WTC11 (cell line): ENCODE measurements at regions of chr6 and their contacts with region 1.

Region 1: DNA sequence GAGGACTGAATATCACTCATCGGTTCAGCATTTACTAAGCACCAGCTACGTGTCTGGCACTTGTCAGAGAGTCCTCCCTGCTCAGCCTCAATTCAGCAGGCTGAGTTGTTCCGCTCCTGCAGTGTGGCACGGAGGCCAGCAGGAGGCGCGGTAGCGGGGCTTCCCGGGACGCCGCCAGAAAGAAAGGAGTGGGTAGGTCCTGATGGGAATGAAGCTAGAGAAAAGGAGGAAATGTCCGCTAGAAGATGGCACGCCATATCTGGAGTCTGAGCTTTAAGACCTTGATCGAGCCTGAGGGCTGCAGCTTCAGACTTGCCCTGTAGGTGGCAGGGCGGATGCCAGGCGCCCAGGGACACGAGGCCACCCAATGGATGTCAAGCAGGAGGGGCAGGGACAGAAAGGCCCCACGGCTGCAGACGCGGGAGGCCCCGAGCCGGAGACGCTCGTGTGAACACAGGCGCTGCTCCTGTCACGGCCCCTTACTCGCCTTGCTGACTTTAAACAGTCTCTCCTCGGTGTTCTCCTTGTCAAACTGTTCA is 18.7 kb downstream of the SERPINB6 start:
- DNase-seq: peak; percentile 91
- ATAC-seq: peak; percentile 92
- H3K4me3 Mint-ChIP-seq: peak overlapping the region; percentile 22; the same call in 1 of the 2 replicates
- H3K27ac Mint-ChIP-seq: peak overlapping the region; percentile 33; the same call in 1 of the 2 replicates
- H3K4me1 Mint-ChIP-seq: peaks cover 24% of the 10 kb centered on the region
- H3K27me3 Mint-ChIP-seq: no peaks in the 10 kb centered on the region
- CTCF ChIP-seq: peak; percentile 96

Region 2: DNA sequence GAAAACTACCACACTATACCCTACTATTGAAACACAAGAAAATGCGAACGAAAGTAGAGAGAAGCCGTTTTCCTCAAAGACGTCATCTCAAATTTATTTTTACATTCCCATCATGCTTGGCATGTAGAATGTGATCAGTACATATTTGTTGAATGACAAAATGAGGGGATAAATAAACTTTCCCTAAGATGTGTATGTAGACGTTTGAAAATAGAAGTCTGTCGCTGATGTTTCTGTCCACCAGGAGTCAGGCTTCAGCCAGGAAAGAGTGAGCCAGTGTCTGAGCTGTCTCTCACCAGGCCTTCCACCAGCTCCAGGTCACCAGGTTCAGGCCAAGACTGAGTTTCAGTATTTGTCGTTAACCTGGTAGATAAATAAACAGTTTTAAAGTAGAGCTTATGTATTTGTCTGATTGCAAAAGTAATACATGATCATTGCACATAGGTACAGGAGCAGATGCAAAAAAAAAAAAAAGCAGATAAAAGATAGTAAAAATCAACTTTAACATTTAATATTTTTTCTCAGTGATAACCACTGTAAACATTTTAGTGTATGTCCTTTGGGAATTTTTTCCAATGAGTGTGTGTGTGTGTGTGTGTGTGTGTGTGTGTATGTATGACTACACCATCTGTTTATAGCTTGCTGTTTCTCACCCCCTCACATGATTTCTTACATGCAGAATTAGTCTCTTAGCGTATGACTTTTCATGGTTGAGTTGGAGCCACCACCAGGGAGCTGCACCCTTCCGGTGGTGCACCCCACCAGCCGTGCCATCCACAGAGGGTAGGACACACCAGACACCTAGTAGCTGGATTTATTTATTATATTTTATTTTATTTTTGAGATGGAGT is 161.3 kb before region 1 on chr6:
- CTCF ChIA-PET with region 1: interaction called, 34 read pairs
- POLR2A ChIA-PET with region 1: no interaction called
- DNase-seq: peak; percentile 65
- ATAC-seq: peak; percentile 73
- H3K4me3 Mint-ChIP-seq: no peak overlapping the region
- H3K27ac Mint-ChIP-seq: peak overlapping the region; percentile 95
- H3K4me1 Mint-ChIP-seq: peaks cover 13% of the 10 kb centered on the region
- H3K27me3 Mint-ChIP-seq: no peaks in the 10 kb centered on the region
- CTCF ChIP-seq: peak; percentile 43

Region 3: DNA sequence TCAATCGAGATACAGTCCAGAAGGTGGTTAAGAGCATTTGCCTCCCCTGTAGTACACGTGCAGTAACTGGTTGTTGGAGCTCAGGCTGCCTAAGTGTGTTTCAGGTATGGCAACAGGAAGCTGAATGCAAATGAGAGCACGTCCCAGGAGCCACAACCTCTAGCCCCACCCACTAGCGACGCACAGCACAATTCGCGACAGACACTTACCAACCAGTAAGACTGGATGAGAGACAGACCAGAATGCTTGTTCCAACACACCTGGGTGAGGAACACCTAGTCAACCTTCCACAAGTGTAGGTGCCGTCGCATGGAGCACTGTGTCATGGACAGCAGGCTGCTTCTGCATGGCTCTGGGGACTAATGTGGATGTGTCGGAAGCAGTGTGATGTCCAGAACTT is 103.8 kb before region 1 on chr6:
- CTCF ChIA-PET with region 1: interaction called, 52 read pairs
- POLR2A ChIA-PET with region 1: interaction called, 3 read pairs
- DNase-seq: peak; percentile 63
- ATAC-seq: peak; percentile 82
- H3K4me3 Mint-ChIP-seq: 0 out of 2 replicates have a peak overlapping the region, but pooled peaks have one; percentile 0
- H3K27ac Mint-ChIP-seq: peak overlapping the region; percentile 88
- H3K4me1 Mint-ChIP-seq: peaks cover 37% of the 10 kb centered on the region
- H3K27me3 Mint-ChIP-seq: no peaks in the 10 kb centered on the region
- CTCF ChIP-seq: no peak

Region 4: DNA sequence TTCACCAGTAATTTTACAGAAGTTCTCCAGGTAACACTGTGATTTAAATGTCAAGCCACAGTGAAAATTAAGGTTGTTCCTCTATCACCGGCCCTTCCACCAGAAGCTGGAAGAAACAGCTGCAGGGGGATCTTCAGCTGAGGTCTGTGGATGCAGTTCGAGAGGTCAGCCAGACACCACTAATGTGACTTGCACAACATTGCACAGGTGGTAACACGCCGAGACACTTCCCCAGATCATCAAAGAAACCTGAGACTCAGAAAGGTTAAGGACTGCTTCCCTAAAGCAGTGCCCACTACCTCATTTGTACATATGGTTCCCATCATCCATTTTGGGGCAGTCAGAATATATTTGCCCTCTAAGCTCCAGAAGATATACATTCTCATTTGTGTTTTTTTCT is 41.5 kb before region 1 on chr6:
- CTCF ChIA-PET with region 1: interaction called, 22 read pairs
- POLR2A ChIA-PET with region 1: no interaction called
- DNase-seq: no peak
- ATAC-seq: no peak
- H3K4me3 Mint-ChIP-seq: no peak overlapping the region
- H3K27ac Mint-ChIP-seq: no peak overlapping the region
- H3K4me1 Mint-ChIP-seq: peaks cover 60% of the 10 kb centered on the region
- H3K27me3 Mint-ChIP-seq: no peaks in the 10 kb centered on the region
- CTCF ChIP-seq: no peak

Region 5: DNA sequence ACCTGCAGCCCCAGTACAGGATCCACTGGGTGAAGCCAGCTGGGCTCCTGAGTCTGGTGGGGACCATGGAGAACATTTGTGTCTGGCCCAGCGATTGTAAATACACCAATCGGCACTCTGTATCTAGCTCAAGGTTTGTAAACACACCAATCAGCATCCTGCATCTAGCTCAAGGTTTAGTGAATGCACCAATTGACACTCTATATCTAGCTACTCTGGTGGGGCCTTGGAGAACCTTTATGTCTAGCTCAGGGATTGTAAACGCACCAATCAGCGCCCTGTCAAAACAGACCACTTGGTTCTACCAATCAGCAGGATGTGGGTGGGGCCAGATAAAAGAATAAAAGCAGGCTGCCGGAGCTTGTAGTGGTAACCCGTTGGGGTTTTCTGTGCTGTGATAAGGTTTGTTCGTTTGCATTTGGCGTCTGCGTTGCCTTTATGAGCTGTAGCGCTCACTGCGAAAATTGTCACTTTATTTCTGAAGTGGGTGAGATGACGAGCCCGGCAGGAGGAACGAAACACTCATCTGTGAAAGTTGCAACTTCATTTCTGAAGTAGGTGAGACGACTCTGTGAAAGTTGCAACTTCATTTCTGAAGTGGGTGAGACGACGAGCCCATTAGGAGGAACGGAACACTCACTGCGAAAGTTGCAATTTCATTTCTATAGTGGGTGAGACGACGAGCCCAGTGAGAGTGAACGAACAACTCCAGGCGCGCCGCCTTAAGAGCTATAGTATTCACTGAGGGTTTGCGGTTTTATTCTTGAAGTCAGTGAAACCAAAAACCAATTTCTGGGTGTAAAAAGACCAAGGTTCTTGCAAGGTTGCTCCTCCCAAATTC is 12.4 kb before region 1 on chr6:
- CTCF ChIA-PET with region 1: interaction called, 114 read pairs
- POLR2A ChIA-PET with region 1: no interaction called
- DNase-seq: no peak
- ATAC-seq: no peak
- H3K4me3 Mint-ChIP-seq: no peak overlapping the region
- H3K27ac Mint-ChIP-seq: no peak overlapping the region
- H3K4me1 Mint-ChIP-seq: peaks cover 27% of the 10 kb centered on the region
- H3K27me3 Mint-ChIP-seq: no peaks in the 10 kb centered on the region
- CTCF ChIP-seq: no peak

Region 6: DNA sequence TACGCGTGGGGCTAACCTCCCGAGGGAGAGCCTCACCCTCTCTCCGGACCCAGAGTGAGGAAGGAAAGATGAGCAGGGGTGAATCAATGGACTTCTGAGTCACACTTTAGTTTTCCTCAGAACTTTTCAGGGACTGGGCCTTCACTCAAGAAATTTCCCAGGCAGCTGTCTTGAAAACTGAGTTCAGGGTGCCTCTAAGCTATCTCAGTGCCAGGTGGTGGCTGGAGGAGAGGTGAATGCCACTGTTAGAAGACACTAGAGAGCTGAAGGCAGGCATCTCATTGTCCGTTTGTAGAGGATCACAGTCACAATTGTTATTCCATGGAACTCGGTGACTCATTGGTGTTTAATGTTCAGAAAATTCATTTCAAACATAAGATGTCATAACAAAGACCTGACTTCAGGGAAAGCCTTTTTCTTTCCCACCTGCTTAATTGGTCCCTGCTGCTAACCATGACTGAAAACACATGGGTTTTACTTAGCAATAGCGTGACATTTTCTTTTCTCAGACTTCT is 24.0 kb after region 1 on chr6:
- CTCF ChIA-PET with region 1: interaction called, 24 read pairs
- POLR2A ChIA-PET with region 1: interaction called, 4 read pairs
- DNase-seq: no peak
- ATAC-seq: no peak
- H3K4me3 Mint-ChIP-seq: no peak overlapping the region
- H3K27ac Mint-ChIP-seq: no peak overlapping the region
- H3K4me1 Mint-ChIP-seq: peaks cover 34% of the 10 kb centered on the region
- H3K27me3 Mint-ChIP-seq: peaks cover 19% of the 10 kb centered on the region
- CTCF ChIP-seq: no peak

Region 7: GRCh38 chr6:3039384-3039783 is 86.8 kb after region 1 on chr6:
- CTCF ChIA-PET with region 1: interaction called, 10 read pairs
- POLR2A ChIA-PET with region 1: no interaction called
- DNase-seq: no peak
- ATAC-seq: no peak
- H3K4me3 Mint-ChIP-seq: no peak overlapping the region
- H3K27ac Mint-ChIP-seq: no peak overlapping the region
- H3K4me1 Mint-ChIP-seq: peaks cover 12% of the 10 kb centered on the region
- H3K27me3 Mint-ChIP-seq: peaks cover 3% of the 10 kb centered on the region; the same call in 1 of the 2 replicates
- CTCF ChIP-seq: no peak